Activated naive CD4-positive, alpha-beta T cell treated with anti-CD3 and anti-CD28 coated beads, Interleukin-2, amount 10 ng/mL, durations not matched to agents 7 days and 5 days (primary cell): ENCODE measurements at regions of chr14 and their contacts with region 1.

Region 1: GRCh38 chr14:92783816-92784431 is 10.2 kb upstream of the GOLGA5 start:
- DNase-seq: peak; percentile 52
- H3K4me3 Mint-ChIP-seq: no peak overlapping the region
- H3K27ac Mint-ChIP-seq: no peak overlapping the region
- H3K4me1 Mint-ChIP-seq: peaks cover 25% of the 10 kb centered on the region
- H3K27me3 Mint-ChIP-seq: no peaks in the 10 kb centered on the region

Region 2: GRCh38 chr14:92302481-92302880 is 481.4 kb before region 1 on chr14:
- CTCF ChIA-PET with region 1: no interaction called
- DNase-seq: no peak
- H3K4me3 Mint-ChIP-seq: no peak overlapping the region
- H3K27ac Mint-ChIP-seq: no peak overlapping the region
- H3K4me1 Mint-ChIP-seq: no peaks in the 10 kb centered on the region
- H3K27me3 Mint-ChIP-seq: peaks cover 46% of the 10 kb centered on the region

Region 3: GRCh38 chr14:92717571-92718042 is 66.3 kb before region 1 on chr14:
- CTCF ChIA-PET with region 1: interaction called, 38 read pairs
- DNase-seq: no peak
- H3K4me3 Mint-ChIP-seq: no peak overlapping the region
- H3K27ac Mint-ChIP-seq: no peak overlapping the region
- H3K4me1 Mint-ChIP-seq: peaks cover 5% of the 10 kb centered on the region
- H3K27me3 Mint-ChIP-seq: peaks cover 4% of the 10 kb centered on the region